Colonic mucosa (tissue), 4 donors: ENCODE measurements at regions of chr3 and their contacts with region 1.

Region 1: GRCh38 chr3:120742198-120742849 is at the starts of genes GTF2E1 and RABL3:
- DNase-seq: peak; percentile 99
- H3K4me3 ChIP-seq: peak within 1 kb of the TSS; percentile 93
- H3K27ac ChIP-seq: peak within 1 kb of the TSS; percentile 91
- H3K4me1 ChIP-seq: no peaks in the 10 kb centered on the region
- H3K27me3 ChIP-seq: no peaks in the 10 kb centered on the region
- CTCF ChIP-seq: no peak
- total RNA-seq, gene GTF2E1: 15.2 to 17.9 TPM
- total RNA-seq, gene RABL3: 25.5 to 30.5 TPM

Region 2: DNA sequence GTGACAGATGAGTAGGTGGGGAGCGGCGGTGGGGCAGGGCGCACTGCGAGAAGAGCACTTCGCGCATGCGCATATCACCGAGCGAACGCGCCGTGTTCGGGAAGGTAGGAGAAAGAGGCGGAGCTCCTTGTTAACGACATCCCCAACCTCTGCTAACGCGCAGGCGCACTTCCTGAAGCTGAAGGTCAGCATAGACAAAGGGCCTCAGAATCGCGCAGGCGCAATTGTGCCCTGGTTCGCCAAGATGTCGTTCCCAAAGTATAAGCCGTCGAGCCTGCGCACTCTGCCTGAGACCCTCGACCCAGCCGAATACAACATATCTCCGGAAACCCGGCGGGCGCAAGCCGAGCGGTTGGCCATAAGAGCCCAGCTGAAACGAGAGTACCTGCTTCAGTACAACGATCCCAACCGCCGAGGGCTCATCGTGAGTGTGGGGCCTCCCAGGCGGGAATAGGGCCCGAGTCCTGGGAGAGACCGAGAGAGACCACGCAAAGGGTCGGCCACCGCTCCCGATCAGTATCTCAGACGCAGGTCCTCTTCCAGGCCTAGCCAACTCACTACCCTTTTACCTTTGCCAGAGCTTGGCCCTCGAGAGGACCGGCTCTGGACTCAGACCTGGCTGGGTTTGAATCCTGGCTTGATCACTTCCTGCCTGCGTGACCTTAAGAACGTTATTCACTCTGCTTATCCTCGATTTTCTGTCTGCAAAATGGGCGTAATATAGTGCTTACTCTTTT is 146.0 kb before region 1 on chr3 and contains the start of gene NDUFB4:
- intact Hi-C with region 1: loop called (anchors 5 kb)
- DNase-seq: peak; percentile 97
- H3K4me3 ChIP-seq: peak within 1 kb of the TSS; percentile 64
- H3K27ac ChIP-seq: peak within 1 kb of the TSS; percentile 87
- H3K4me1 ChIP-seq: peaks cover 9% of the 10 kb centered on the region
- H3K27me3 ChIP-seq: no peaks in the 10 kb centered on the region
- CTCF ChIP-seq: no peak
- total RNA-seq, gene NDUFB4: 183 to 192 TPM

Region 3: GRCh38 chr3:120678331-120678947 is 63.9 kb before region 1 on chr3:
- intact Hi-C with region 1: no loop called
- DNase-seq: peak; percentile 87
- H3K4me3 ChIP-seq: no peak overlapping the region
- H3K27ac ChIP-seq: peak overlapping the region; percentile 68
- H3K4me1 ChIP-seq: no peaks in the 10 kb centered on the region
- H3K27me3 ChIP-seq: no peaks in the 10 kb centered on the region
- CTCF ChIP-seq: no peak

Region 4: GRCh38 chr3:120795017-120795648 is 52.8 kb after region 1 on chr3:
- intact Hi-C with region 1: loop called (anchors 10 kb)
- DNase-seq: peak; percentile 80
- H3K4me3 ChIP-seq: no peak overlapping the region
- H3K27ac ChIP-seq: no peak overlapping the region
- H3K4me1 ChIP-seq: peaks cover 3% of the 10 kb centered on the region
- H3K27me3 ChIP-seq: no peaks in the 10 kb centered on the region
- CTCF ChIP-seq: peak; percentile 57